ENCODE measurements at regions of chr12 and their contacts with region 1.

Region 1: GRCh38 chr12:70603044-70603443 is 34.2 kb downstream of the PTPRB start:
- DNase-seq: no peak
- H3K4me3 ChIP-seq: no peak overlapping the region
- CTCF ChIP-seq: no peak

Region 2: DNA sequence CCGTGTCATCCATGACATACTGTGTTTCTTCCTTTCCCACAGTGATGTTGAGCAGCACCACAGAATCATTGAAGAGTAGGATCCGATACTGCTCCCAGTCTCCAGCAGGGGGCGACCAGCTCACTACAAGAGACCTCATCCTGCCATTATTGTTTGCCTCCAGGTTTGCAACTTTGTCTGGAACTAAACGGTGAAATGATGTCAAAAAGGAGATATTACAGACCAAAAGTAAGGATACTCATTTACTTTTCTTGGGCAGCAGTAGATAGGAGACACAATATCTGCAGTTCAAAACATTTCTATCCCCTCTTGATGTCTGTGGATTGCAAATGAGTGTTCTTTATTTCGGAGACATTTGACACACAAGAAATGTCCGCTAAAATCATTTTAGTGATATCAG is 13.0 kb before region 1 on chr12:
- CTCF ChIA-PET with region 1: interaction called, 18 read pairs
- POLR2A ChIA-PET with region 1: no interaction called
- DNase-seq: peak; percentile 28
- H3K4me3 ChIP-seq: no peak overlapping the region
- CTCF ChIP-seq: peak; percentile 80

Region 3: DNA sequence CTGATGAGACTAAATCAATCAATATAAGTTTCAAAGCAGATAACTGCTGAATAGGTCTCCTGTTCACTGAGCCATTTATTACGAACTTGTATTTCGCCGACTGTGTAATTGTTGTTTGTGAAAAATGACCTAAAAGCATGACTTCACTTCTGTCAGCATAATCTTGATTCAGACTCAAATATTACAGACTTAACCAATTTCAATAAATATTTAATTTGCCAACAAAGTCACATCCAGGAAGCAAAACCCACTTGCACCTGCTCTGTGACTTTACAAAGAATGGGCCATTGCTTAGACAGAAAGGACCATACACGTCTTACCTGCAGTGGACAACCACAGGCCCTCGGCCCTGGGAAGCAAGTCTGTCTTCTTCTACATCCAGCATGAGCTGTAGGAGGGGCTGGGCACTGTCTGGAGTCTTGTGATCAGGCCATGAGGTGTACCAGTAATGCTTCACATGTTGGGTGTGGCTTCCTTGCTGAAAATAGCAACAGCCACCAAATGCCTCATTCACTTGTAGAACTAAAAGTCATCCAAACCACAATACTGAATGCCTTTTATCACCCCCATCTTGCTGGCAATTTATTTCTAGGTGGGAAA is 57.7 kb after region 1 on chr12:
- CTCF ChIA-PET with region 1: no interaction called
- POLR2A ChIA-PET with region 1: no interaction called
- DNase-seq: peak; percentile 59
- H3K4me3 ChIP-seq: no peak overlapping the region
- CTCF ChIP-seq: no peak

Region 4: GRCh38 chr12:70784042-70784668 is 181.1 kb after region 1 on chr12:
- CTCF ChIA-PET with region 1: no interaction called
- POLR2A ChIA-PET with region 1: no interaction called
- DNase-seq: no peak
- H3K4me3 ChIP-seq: no peak overlapping the region
- CTCF ChIP-seq: no peak

Measured in AG04449 (cell line).